ENCODE measurements at regions of chr12 and their contacts with region 1.

Region 1: GRCh38 chr12:124720004-124720680 is 143.5 kb downstream of the SCARB1 start:
- DNase-seq: peak; percentile 72
- H3K4me3 ChIP-seq: no peak overlapping the region
- H3K27ac ChIP-seq: peak overlapping the region; percentile 80
- H3K4me1 ChIP-seq: peaks cover 27% of the 10 kb centered on the region
- H3K27me3 ChIP-seq: no peaks in the 10 kb centered on the region
- CTCF ChIP-seq: peak; percentile 20 to 38
- POLR2A ChIP-seq: no peak

Region 2: GRCh38 chr12:124687917-124688316 is 32.2 kb before region 1 on chr12:
- CTCF ChIA-PET with region 1: interaction called, 9 read pairs
- POLR2A ChIA-PET with region 1: interaction called, 3 read pairs
- dilution Hi-C with region 1: no loop called
- intact Hi-C with region 1: loop called (anchors 1 kb)
- DNase-seq: peak; percentile 58
- H3K4me3 ChIP-seq: no peak overlapping the region
- H3K27ac ChIP-seq: peak overlapping the region; percentile 67
- H3K4me1 ChIP-seq: peaks cover 34% of the 10 kb centered on the region
- H3K27me3 ChIP-seq: no peaks in the 10 kb centered on the region
- CTCF ChIP-seq: no peak
- POLR2A ChIP-seq: no peak

Region 3: DNA sequence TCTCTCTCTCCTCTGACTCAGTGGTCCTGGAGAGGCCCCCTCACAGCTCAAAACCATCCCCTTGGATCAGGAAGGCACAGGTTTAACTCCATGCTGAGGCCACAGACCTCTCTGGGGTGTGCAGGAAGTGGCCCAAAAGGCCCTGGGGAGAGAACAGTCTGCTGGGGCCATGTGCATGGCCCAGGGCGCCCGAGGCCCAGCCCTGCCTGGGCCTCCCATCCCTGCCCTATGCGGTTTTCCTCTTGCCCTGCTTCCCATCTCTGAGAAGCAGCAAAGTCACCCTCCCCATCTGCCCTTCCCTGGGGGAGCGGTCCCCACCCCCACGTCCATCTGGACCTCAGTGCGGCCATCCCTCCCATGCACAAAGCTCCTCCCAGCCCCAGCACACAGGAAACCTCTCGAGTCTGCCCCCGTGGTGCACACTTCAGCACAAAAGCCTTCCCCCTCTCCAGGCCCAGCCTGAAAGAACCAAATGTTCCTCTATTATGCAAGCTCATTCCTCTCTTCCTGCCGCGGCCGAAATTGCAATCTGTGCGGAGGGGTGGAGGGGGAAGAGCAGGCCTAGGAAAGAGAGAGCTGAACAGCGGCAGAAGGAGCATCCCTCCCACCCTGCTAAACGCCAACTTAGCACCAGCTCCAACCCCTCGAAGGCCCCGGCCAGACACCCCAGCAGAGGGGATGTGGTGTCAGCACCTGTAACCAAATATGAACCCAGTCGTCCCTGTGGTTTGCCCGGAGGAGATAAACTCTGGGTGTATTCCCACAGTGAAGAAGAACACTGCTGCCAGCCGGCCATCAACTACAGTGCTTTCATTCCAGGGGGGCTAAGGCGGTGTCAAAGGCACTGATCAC is 35.0 kb after region 1 on chr12:
- CTCF ChIA-PET with region 1: no interaction called
- POLR2A ChIA-PET with region 1: no interaction called
- dilution Hi-C with region 1: no loop called
- intact Hi-C with region 1: no loop called
- DNase-seq: no peak
- H3K4me3 ChIP-seq: no peak overlapping the region
- H3K27ac ChIP-seq: no peak overlapping the region
- H3K4me1 ChIP-seq: no peaks in the 10 kb centered on the region
- H3K27me3 ChIP-seq: peaks cover 0 to 4% of the 10 kb centered on the region in 2 experiments
- CTCF ChIP-seq: no peak
- POLR2A ChIP-seq: no peak

Region 4: GRCh38 chr12:124774462-124775167 is 54.5 kb after region 1 on chr12:
- CTCF ChIA-PET with region 1: no interaction called
- POLR2A ChIA-PET with region 1: no interaction called
- dilution Hi-C with region 1: no loop called
- intact Hi-C with region 1: no loop called
- DNase-seq: no peak
- H3K4me3 ChIP-seq: no peak overlapping the region
- H3K27ac ChIP-seq: no peak overlapping the region
- H3K4me1 ChIP-seq: peaks cover 9% of the 10 kb centered on the region
- H3K27me3 ChIP-seq: no peaks in the 10 kb centered on the region
- CTCF ChIP-seq: no peak
- POLR2A ChIP-seq: no peak

Measured in endothelial cell of umbilical vein (primary cell).